ENCODE measurements at regions of chr6 and their contacts with region 1.

Region 1: GRCh38 chr6:157823001-157823527 is at the start of gene SNX9:
- DNase-seq: peak; percentile 27 to 81 (median 63)
- ATAC-seq: peak; percentile 46
- H3K4me3 ChIP-seq: peak within 1 kb of the TSS; percentile 43 to 51
- H3K4me3 Mint-ChIP-seq: peak within 1 kb of the TSS; percentile 93
- H3K27ac ChIP-seq: peak within 1 kb of the TSS; percentile 74 to 87
- H3K27ac Mint-ChIP-seq: peak within 1 kb of the TSS; percentile 98
- H3K4me1 ChIP-seq: peaks cover 21% of the 10 kb centered on the region
- H3K4me1 Mint-ChIP-seq: peaks cover 34% of the 10 kb centered on the region
- H3K27me3 ChIP-seq: no peaks in the 10 kb centered on the region
- H3K27me3 Mint-ChIP-seq: no peaks in the 10 kb centered on the region
- CTCF ChIP-seq: no peak
- total RNA-seq, gene SNX9: 54.8 to 63.2 TPM

Region 2: GRCh38 chr6:157764178-157765033 is 58.7 kb before region 1 on chr6:
- CTCF ChIA-PET with region 1: interaction called, 6 read pairs
- POLR2A ChIA-PET with region 1: interaction called, 3 read pairs
- intact Hi-C with region 1: loop called (anchors 1 kb)
- DNase-seq: peak; percentile 57 to 93 (median 80)
- ATAC-seq: peak; percentile 51
- H3K4me3 ChIP-seq: peak overlapping the region; percentile 10 to 23
- H3K4me3 Mint-ChIP-seq: peak overlapping the region; percentile 74
- H3K27ac ChIP-seq: peak overlapping the region; percentile 27 to 61
- H3K27ac Mint-ChIP-seq: peak overlapping the region; percentile 95
- H3K4me1 ChIP-seq: peaks cover 69% of the 10 kb centered on the region
- H3K4me1 Mint-ChIP-seq: peaks cover 73% of the 10 kb centered on the region
- H3K27me3 ChIP-seq: no peaks in the 10 kb centered on the region
- H3K27me3 Mint-ChIP-seq: no peaks in the 10 kb centered on the region
- CTCF ChIP-seq: no peak

Region 3: GRCh38 chr6:157867155-157867559 is 44.1 kb after region 1 on chr6:
- CTCF ChIA-PET with region 1: no interaction called
- POLR2A ChIA-PET with region 1: no interaction called
- intact Hi-C with region 1: loop called (anchors 2 to 5 kb)
- DNase-seq: peak in 4 of 9 experiments; percentile 26 to 34 (median 27)
- ATAC-seq: peak; percentile 50
- H3K4me3 ChIP-seq: no peak overlapping the region
- H3K4me3 Mint-ChIP-seq: no peak overlapping the region
- H3K27ac ChIP-seq: no peak overlapping the region
- H3K27ac Mint-ChIP-seq: peak overlapping the region; percentile 55
- H3K4me1 ChIP-seq: peaks cover 11% of the 10 kb centered on the region
- H3K4me1 Mint-ChIP-seq: peaks cover 35% of the 10 kb centered on the region
- H3K27me3 ChIP-seq: no peaks in the 10 kb centered on the region
- H3K27me3 Mint-ChIP-seq: no peaks in the 10 kb centered on the region
- CTCF ChIP-seq: no peak

Region 4: DNA sequence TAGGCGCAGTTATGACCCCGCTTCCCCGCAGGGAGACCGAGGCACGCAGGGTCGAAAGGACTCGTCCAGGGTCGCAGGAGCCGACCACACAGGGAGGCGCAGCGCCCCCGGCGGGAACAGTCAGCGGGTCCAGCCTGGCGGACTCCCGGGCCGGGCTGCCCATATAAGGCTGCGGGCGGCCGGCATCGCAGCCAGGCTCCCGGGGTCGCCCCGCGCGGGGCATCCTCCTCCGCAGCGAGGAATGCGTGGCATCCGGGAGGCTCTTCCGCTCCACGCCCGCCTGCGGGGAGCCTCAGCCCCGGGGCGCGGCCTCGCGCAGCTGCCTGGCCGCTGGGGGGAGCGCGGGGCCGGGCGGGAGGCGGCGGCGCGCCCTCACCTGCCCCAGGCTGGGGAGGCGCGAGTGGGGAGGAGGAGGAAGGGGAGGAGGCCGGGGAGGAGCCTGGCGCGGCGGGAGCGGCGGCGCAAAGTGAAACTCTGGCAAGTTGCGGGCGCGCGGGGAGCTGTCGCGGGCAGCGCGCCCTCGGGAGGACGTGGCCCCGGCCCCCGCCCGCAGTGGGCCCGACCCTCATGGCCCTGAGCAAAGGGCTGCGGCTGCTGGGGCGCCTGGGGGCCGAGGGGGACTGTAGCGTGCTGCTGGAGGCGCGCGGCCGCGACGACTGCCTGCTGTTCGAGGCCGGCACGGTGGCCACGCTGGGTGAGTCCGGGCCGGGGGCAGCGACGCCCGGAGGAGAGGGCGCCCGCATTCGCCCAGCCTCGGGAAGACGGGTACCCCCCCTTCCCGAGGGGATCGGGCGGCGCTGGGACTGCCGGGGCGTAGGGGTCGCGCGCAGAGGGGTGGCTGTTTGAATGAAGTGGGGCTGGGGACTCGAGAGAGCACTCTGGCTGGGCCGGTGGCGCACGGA is 158.6 kb after region 1 on chr6 and contains the start of gene SYNJ2:
- CTCF ChIA-PET with region 1: no interaction called
- POLR2A ChIA-PET with region 1: no interaction called
- intact Hi-C with region 1: loop called in 1 of 2 experiments (anchors 1 kb)
- DNase-seq: peak; percentile 66 to 90 (median 82)
- ATAC-seq: peak; percentile 91
- H3K4me3 ChIP-seq: peak within 1 kb of the TSS; percentile 69 to 87
- H3K4me3 Mint-ChIP-seq: peak within 1 kb of the TSS; percentile 89
- H3K27ac ChIP-seq: peak within 1 kb of the TSS; percentile 43 to 55
- H3K27ac Mint-ChIP-seq: peak within 1 kb of the TSS; percentile 55
- H3K4me1 ChIP-seq: peaks cover 49% of the 10 kb centered on the region
- H3K4me1 Mint-ChIP-seq: peaks cover 47% of the 10 kb centered on the region
- H3K27me3 ChIP-seq: no peaks in the 10 kb centered on the region
- H3K27me3 Mint-ChIP-seq: no peaks in the 10 kb centered on the region
- CTCF ChIP-seq: peak; percentile 38
- total RNA-seq, gene SYNJ2: 28.4 to 29.5 TPM

Measured in CD8-positive, alpha-beta T cell (primary cell).